ENCODE measurements at regions of chr1 and their contacts with region 1.

Region 1: GRCh38 chr1:3721955-3722465 is 30.2 kb upstream of the CCDC27 start:
- DNase-seq: no peak
- H3K4me3 ChIP-seq: no peak overlapping the region
- H3K4me3 Mint-ChIP-seq: no peak overlapping the region
- H3K27ac Mint-ChIP-seq: no peak overlapping the region
- H3K4me1 ChIP-seq: no peaks in the 10 kb centered on the region
- H3K4me1 Mint-ChIP-seq: no peaks in the 10 kb centered on the region
- H3K27me3 ChIP-seq: no peaks in the 10 kb centered on the region
- H3K27me3 Mint-ChIP-seq: no peaks in the 10 kb centered on the region
- CTCF ChIP-seq: no peak

Region 2: DNA sequence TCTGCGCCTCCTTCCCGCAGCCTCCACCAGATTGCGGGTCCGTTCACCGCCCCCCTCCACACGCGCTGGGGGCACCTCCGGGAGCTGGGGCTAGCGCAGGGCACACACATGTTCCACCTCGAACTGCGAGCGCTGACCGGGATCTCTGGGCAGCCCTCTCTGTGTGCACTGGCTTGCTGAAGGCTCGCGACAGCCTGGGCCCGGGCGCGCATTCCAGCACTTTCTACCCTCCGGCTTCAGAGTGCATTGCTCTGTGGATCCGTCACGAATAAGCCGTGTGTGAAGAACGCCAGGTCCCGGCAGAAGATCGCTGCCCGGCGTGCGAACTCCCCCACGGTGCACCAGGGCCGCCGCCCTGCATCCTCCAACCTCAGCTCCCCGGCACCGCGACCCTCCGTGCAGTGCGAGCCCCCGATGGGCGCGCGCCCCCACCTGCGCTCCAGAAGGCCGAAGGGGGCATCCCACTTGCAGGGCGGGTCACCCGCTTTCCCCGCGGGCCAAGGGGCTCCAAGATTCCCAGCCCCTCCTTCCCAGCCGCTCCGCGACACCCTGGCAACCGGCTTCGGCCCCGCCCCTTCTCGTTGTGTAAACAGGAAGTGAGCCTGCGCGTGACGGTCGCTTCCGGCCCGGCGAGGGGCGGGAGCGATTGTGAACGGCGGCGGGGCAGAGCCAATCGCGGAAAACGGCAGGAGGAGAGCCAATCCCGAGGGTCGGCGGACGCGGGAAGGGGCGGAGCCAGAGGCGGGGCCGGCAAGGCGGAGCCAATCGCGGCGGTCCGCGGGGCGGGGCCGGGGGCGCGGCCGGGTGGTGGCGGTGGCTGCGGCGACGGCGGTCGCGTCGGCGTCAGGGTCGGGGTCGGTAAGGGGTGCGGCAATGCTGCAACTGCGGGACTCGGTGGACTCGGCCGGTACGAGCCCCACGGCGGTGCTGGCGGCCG is 97.5 kb before region 1 on chr1 and contains the start of gene TPRG1L:
- CTCF ChIA-PET with region 1: interaction called, 3 read pairs
- POLR2A ChIA-PET with region 1: no interaction called
- intact Hi-C with region 1: loop called (anchors 5 kb)
- DNase-seq: peak; percentile 96 to 98
- H3K4me3 ChIP-seq: peak within 1 kb of the TSS; percentile 98
- H3K4me3 Mint-ChIP-seq: peak within 1 kb of the TSS; percentile 85
- H3K27ac Mint-ChIP-seq: peak within 1 kb of the TSS; percentile 79
- H3K4me1 ChIP-seq: peaks cover 10% of the 10 kb centered on the region
- H3K4me1 Mint-ChIP-seq: peaks cover 14% of the 10 kb centered on the region
- H3K27me3 ChIP-seq: no peaks in the 10 kb centered on the region
- H3K27me3 Mint-ChIP-seq: no peaks in the 10 kb centered on the region
- CTCF ChIP-seq: no peak
- total RNA-seq, gene TPRG1L: 39.0 and 43.9 TPM in 2 replicates

Region 3: DNA sequence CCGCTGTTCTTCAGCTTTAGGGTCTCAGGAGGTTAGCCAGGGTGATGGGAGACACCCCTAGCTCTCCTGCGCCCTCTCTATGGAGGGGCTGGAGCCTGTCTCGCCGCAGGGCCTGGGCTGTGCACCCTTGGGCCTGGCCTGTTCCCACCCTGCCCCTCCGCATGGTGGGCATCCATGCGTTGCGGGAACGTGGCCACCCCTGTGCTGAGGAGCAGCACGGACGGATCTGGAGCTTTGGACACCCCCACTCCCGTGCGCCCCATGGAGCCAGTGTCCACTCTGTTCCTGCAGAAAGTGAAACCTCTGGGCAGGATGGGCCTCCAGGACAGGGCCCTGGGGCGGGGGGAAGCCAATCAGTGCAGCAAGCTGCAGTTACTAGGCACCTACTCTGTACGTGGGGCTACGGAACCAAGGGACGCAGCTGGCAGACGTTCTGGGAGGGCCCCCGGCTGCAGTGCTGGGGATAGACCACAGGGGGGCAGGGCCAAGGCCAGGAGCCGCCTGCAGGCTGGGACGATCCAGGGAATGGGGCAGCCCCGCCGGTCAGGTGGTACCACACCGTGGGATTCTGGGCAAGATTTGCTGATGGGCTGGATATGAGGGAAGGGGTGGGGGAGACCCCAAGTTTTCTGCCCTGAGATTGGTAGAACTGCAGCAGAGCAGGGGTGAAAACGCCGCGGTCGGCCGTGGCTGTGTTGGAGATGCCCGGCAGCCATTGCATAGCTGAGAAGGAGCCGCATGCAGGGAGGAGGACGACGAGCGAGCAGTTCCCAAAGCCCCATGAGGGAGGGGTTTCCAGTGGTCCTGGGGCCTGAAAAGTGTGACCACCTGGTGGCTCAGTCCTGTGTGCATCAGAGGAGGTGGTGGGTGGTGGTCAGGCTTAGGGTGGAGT is 26.4 kb before region 1 on chr1:
- CTCF ChIA-PET with region 1: interaction called, 8 read pairs
- POLR2A ChIA-PET with region 1: no interaction called
- intact Hi-C with region 1: loop called (anchors 2 kb)
- DNase-seq: peak in 1 of 2 experiments; percentile 51
- H3K4me3 ChIP-seq: no peak overlapping the region
- H3K4me3 Mint-ChIP-seq: no peak overlapping the region
- H3K27ac Mint-ChIP-seq: no peak overlapping the region
- H3K4me1 ChIP-seq: no peaks in the 10 kb centered on the region
- H3K4me1 Mint-ChIP-seq: no peaks in the 10 kb centered on the region
- H3K27me3 ChIP-seq: no peaks in the 10 kb centered on the region
- H3K27me3 Mint-ChIP-seq: no peaks in the 10 kb centered on the region
- CTCF ChIP-seq: peak; percentile 53 to 67

Region 4: DNA sequence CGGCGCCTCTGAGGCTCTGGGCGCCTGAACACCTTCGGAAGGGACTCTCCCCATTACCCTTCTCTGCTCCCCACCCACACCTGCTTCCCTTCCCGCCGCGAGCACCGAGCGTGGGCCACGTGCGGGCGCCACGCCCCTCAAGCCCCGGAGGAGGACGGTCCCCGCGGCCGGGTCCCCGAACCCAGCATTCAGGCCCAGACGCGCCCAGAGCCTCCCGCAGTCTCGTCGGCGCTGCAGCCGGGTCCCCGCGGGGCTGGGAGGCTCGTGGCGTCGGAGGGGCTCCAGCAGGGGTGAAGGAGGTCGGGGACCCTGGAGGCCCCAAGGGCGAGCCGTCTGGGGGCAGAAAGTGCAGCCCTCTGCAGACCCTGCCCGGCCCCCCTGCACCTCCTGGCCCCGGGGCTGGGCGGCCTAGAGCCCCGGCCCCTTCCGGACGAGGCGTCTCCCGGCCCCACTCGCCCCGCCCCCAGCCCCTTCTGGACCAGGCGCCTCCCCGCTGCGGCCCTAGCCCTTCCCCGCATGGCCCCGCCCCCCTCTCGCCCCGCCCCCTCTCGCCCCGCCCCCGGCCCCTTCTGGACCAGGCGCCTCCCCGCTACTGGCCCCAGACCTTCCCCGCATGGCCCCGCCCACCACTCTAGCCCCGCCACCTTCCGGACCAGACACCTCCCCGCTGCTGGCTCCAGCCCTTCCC is 50.2 kb after region 1 on chr1:
- CTCF ChIA-PET with region 1: no interaction called
- POLR2A ChIA-PET with region 1: no interaction called
- intact Hi-C with region 1: loop called (anchors 2 kb)
- DNase-seq: peak; percentile 93 to 96
- H3K4me3 ChIP-seq: peak overlapping the region; percentile 69
- H3K4me3 Mint-ChIP-seq: peak overlapping the region; percentile 61
- H3K27ac Mint-ChIP-seq: peak overlapping the region; percentile 15
- H3K4me1 ChIP-seq: peaks cover 26% of the 10 kb centered on the region; the same call in 1 of the 2 replicates
- H3K4me1 Mint-ChIP-seq: no peaks in the 10 kb centered on the region
- H3K27me3 ChIP-seq: no peaks in the 10 kb centered on the region
- H3K27me3 Mint-ChIP-seq: no peaks in the 10 kb centered on the region
- CTCF ChIP-seq: no peak